H1 (cell line): ENCODE measurements at regions of chr11 and their contacts with region 1.

Region 1: DNA sequence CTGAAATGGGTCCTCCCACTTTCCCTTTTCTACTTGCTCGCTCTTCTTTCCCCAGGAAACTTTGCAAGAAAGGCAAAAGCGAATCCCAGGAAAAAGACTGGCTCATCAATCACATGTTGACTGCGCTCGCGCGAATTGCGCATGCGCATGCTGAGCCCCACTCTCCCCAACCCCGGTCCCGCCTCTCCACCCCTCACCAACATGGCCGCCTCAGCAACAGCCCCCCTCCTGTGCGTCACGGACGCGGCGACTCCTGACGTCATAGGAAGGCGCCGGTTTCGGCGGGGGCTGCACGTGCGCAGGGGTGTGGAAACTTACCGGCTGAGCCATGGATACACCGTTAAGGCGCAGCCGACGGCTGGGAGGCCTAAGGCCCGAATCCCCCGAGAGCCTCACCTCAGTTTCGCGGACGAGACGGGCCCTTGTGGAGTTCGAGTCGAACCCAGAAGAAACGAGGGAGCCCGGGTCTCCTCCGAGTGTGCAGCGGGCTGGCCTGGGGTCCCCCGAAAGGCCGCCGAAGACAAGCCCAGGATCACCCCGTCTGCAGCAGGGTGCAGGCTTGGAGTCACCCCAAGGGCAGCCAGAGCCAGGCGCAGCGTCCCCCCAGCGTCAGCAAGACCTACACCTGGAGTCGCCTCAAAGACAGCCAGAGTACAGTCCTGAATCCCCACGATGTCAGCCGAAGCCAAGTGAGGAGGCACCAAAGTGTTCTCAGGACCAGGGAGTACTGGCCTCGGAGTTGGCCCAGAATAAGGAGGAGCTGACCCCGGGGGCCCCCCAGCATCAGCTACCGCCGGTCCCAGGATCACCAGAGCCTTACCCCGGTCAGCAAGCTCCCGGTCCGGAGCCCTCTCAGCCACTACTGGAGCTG is at the start of gene CCDC86:
- DNase-seq: peak; percentile 95 to 100
- H3K4me3 ChIP-seq: peak within 1 kb of the TSS; percentile 79 to 92 (median 86)
- H3K27ac ChIP-seq: peak within 1 kb of the TSS; percentile 77; the same call in 1 of the 2 replicates
- H3K4me1 ChIP-seq: peaks cover 0 to 21% (median 7%) of the 10 kb centered on the region in 4 experiments; a peak in 6 of 7 replicates
- H3K27me3 ChIP-seq: no peaks in the 10 kb centered on the region
- CTCF ChIP-seq: no peak
- EP300 ChIP-seq: peak in 1 of 2 experiments; percentile 76; a peak in 1 of 3 replicates
- POLR2A ChIP-seq: peak in 1 of 2 experiments; percentile 67; a peak in 2 of 3 replicates
- RAD21 ChIP-seq: no peak
- total RNA-seq, gene CCDC86: 76.4 and 77.1 TPM in 2 replicates

Region 2: DNA sequence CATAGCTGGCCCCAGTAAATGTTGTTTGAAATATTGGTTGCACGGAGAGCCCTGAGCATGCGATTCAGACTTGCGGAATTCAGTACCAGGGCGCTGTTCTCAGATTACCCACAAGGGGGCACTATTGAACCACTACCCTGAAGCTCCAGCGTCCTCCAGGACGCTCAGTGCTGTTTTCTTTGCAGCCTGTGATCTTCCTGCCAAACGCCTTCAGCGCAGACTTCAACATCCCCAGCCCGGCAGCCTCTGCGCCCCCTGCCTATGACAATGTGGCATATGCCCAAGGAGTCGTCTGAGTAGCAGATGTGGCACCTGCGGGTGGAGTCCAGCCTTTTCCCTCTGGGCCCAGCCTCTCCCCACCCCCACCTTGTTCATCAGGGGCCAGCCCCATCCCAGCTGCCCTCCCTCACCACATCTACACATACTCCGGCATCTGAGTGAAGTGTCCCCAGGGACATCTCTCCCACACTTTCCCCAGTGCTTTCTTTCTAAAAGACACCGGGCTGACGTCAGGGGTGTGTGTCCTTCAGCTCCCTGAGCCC is 66.5 kb before region 1 on chr11:
- CTCF ChIA-PET with region 1: interaction called, 10 read pairs
- POLR2A ChIA-PET with region 1: interaction called, 3 read pairs
- DNase-seq: peak; percentile 90 to 94
- H3K4me3 ChIP-seq: no peak overlapping the region
- H3K27ac ChIP-seq: no peak overlapping the region
- H3K4me1 ChIP-seq: no peaks in the 10 kb centered on the region; a peak in 1 of 7 replicates
- H3K27me3 ChIP-seq: no peaks in the 10 kb centered on the region
- CTCF ChIP-seq: peak; percentile 65 to 96 (median 93)
- EP300 ChIP-seq: no peak
- POLR2A ChIP-seq: no peak
- RAD21 ChIP-seq: peak; percentile 81 to 86

Region 3: DNA sequence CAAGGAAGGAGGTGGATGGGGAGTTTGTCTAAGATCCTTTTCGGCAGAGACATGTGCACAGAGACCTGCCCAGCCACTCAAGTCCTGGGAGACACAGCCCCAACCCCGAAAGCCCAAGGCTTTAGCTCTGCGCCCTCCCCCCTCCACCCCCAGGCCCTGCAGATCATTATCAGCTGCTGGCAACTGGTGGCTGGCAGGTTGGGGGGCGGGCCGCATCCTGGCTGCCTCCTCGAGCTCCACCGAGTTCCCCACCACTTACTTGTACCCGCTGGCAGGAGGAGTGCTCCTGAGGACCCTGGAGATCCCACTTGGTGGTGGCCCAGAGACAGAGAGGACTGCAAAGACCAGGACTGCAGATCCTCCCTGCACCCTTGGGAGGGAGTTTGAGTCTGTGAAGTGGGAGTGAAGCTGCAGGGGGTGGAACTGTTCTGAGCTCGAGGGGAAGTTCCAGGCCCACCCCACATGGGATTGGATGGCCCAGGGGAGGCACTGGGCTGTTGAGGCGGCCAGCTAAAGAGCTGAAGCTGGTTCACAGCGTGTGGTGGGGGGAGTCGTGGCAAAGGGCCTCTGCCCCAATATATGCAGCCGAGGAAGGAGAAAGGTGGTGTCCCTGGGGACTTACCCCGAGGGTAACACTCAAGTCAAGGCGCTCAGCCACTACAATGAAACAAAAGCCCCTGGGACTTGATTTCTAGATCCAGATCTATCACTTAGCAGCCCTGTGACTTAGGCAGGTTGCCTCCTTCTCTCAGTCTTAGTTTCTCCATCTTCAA is 20.0 kb before region 1 on chr11:
- CTCF ChIA-PET with region 1: interaction called, 78 read pairs
- POLR2A ChIA-PET with region 1: no interaction called
- DNase-seq: no peak
- H3K4me3 ChIP-seq: no peak overlapping the region
- H3K27ac ChIP-seq: no peak overlapping the region
- H3K4me1 ChIP-seq: no peaks in the 10 kb centered on the region; a peak in 1 of 7 replicates
- H3K27me3 ChIP-seq: no peaks in the 10 kb centered on the region; a peak in 1 of 7 replicates
- CTCF ChIP-seq: no peak
- EP300 ChIP-seq: no peak
- POLR2A ChIP-seq: no peak
- RAD21 ChIP-seq: no peak

Region 4: DNA sequence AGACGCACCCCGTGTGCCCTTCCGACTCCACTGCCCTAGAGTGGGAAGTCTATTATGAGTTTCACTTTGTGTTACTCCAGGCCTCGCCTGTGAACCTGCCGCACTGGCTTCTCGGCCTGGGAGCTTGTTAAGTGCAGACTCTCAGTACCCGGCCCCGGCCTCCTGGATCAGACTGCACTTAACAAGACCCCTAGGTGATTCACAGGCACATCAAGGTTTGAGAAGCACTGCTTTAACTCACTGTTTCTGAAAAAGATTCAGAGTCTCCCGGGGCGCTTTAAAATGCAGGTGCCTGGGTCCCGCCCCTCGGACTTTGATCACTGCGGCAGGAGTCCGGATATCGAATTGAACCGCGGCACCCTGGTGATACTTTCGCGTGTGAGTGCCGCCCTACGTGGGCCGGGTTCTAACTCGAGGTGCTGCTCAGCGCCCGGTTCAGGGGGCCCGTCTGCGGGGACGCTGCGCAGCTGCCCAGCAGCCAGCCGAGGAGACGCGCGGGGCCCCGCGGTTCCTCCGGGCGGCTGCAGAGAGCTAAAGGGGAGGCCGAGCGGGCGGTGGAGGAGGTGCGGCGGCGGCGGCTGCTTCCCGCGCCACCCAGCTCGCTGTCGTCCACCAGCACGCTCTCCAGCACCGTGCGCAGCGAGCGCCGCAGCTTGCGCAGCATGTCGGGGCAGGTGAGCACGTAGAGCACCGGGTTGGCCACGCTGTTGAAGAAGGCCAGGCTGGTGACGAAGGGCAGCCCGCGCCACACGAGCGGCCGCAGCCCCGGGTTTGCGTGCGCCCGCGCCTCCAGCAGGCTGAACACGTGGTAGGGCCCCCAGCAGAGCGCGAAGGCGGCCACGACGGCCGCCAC is 10.3 kb after region 1 on chr11:
- CTCF ChIA-PET with region 1: interaction called, 14 read pairs
- POLR2A ChIA-PET with region 1: interaction called, 54 read pairs
- DNase-seq: peak in 1 of 2 experiments; percentile 60
- H3K4me3 ChIP-seq: peak overlapping the region in 3 of 4 experiments; percentile 2 to 49 (median 5); a peak in 4 of 8 replicates
- H3K27ac ChIP-seq: no peak overlapping the region
- H3K4me1 ChIP-seq: peaks cover 0 to 5% (median 0%) of the 10 kb centered on the region in 4 experiments; a peak in 2 of 7 replicates
- H3K27me3 ChIP-seq: peaks cover 3 to 26% (median 16%) of the 10 kb centered on the region in 4 experiments; a peak in 6 of 7 replicates
- CTCF ChIP-seq: no peak
- EP300 ChIP-seq: no peak
- POLR2A ChIP-seq: no peak
- RAD21 ChIP-seq: no peak

Region 5: DNA sequence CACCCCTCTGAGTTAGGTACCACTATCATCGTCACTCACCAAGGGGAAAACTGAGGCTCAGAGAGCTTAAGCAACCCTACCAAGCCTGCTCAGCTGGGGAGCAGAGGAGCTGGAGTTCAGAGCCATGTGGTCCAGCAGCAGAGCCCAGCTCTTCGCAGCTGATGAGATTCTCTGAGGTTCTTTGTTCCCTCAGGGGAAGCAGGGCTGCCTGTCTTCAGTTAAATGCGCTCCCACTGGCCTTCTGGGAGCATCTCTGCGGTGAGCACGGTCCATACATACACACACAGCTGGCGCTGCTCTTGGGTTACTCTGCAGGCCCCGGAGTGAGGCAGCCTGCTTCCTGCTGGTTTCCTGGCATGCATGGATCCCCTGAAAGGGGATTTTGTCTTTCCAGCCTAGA is 18.9 kb after region 1 on chr11:
- CTCF ChIA-PET with region 1: interaction called, 7 read pairs
- POLR2A ChIA-PET with region 1: interaction called, 54 read pairs
- DNase-seq: no peak
- H3K4me3 ChIP-seq: no peak overlapping the region
- H3K27ac ChIP-seq: no peak overlapping the region
- H3K4me1 ChIP-seq: no peaks in the 10 kb centered on the region
- H3K27me3 ChIP-seq: no peaks in the 10 kb centered on the region
- CTCF ChIP-seq: no peak
- EP300 ChIP-seq: no peak
- POLR2A ChIP-seq: no peak
- RAD21 ChIP-seq: no peak

Region 6: GRCh38 chr11:60872961-60873524 is 31.0 kb after region 1 on chr11:
- CTCF ChIA-PET with region 1: interaction called, 13 read pairs
- POLR2A ChIA-PET with region 1: interaction called, 7 read pairs
- DNase-seq: peak in 1 of 2 experiments; percentile 60
- H3K4me3 ChIP-seq: no peak overlapping the region
- H3K27ac ChIP-seq: no peak overlapping the region
- H3K4me1 ChIP-seq: peaks cover 0 to 4% (median 0%) of the 10 kb centered on the region in 4 experiments; a peak in 4 of 7 replicates
- H3K27me3 ChIP-seq: no peaks in the 10 kb centered on the region
- CTCF ChIP-seq: no peak
- EP300 ChIP-seq: no peak
- POLR2A ChIP-seq: no peak
- RAD21 ChIP-seq: no peak

Region 7: GRCh38 chr11:60906132-60906972 is 64.3 kb after region 1 on chr11 and contains the start of gene PRPF19:
- CTCF ChIA-PET with region 1: interaction called, 522 read pairs
- POLR2A ChIA-PET with region 1: interaction called, 4 read pairs
- DNase-seq: peak; percentile 74 to 99
- H3K4me3 ChIP-seq: peak within 1 kb of the TSS; percentile 76 to 91 (median 90)
- H3K27ac ChIP-seq: peak within 1 kb of the TSS; percentile 55
- H3K4me1 ChIP-seq: peaks cover 2 to 8% (median 5%) of the 10 kb centered on the region in 4 experiments; a peak in 4 of 7 replicates
- H3K27me3 ChIP-seq: peaks cover 0 to 2% (median 0%) of the 10 kb centered on the region in 4 experiments; a peak in 1 of 7 replicates
- CTCF ChIP-seq: peak in 1 of 3 experiments; percentile 6; a peak in 1 of 4 replicates
- EP300 ChIP-seq: no peak
- POLR2A ChIP-seq: peak; percentile 49 to 69
- RAD21 ChIP-seq: no peak
- total RNA-seq, gene PRPF19: 140 and 141 TPM in 2 replicates

Region 8: GRCh38 chr11:60935676-60936442 is 93.8 kb after region 1 on chr11:
- CTCF ChIA-PET with region 1: no interaction called
- POLR2A ChIA-PET with region 1: no interaction called
- DNase-seq: no peak
- H3K4me3 ChIP-seq: no peak overlapping the region
- H3K27ac ChIP-seq: no peak overlapping the region
- H3K4me1 ChIP-seq: peaks cover 0 to 3% (median 1%) of the 10 kb centered on the region in 4 experiments; a peak in 4 of 7 replicates
- H3K27me3 ChIP-seq: no peaks in the 10 kb centered on the region
- CTCF ChIP-seq: no peak
- EP300 ChIP-seq: no peak
- POLR2A ChIP-seq: no peak
- RAD21 ChIP-seq: no peak